HCT116 (cell line): ENCODE measurements at regions of chr11 and their contacts with region 1.

Region 1: DNA sequence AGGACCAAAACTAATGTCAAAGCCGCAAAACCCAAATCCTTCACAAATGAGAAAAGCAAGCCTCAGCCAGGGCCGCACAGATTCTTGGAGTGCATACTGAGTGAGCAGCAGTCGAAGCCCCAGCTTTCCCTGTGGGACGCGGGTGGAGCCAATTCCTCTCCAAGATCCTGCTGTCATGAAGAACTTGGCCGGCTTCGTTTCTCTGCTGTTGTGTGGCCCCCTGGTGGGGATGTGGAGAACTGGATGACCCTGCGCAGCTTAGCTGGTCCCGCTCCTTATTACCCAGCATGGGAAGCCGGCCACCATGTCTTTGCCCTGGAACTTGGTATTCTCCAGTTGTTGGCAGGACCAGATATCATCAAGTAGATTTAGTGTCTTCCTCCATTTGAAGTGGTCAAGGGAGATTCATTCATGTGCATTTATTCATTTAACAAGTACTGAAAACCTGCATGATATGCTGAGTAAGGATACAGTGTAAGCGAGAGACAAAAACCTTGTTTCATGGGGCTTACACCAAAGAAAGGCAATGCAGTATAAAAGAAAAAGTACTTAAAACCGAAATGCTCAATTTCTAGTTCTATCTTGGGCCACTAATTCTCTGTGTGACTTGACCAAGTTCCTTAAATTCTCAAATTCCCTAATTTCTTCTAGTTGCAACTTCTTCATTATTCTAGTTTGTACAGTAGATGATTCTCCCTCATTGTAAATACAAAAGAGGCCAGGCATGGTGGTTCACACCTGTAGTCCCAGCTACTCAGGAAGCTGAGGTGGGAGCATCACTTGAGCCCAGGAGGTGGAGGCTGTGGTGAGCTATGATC is 56.7 kb upstream of the CRTAM start:
- DNase-seq: peak; percentile 67
- ATAC-seq: peak; percentile 99
- H3K4me3 ChIP-seq: no peak overlapping the region
- H3K27ac ChIP-seq: no peak overlapping the region
- H3K4me1 ChIP-seq: peaks cover 0 to 6% of the 10 kb centered on the region in 2 experiments; a peak in 2 of 4 replicates
- H3K27me3 ChIP-seq: no peaks in the 10 kb centered on the region
- CTCF ChIP-seq: peak; percentile 88 to 94 (median 92)
- POLR2A ChIP-seq: no peak
- RAD21 ChIP-seq: peak; percentile 94

Region 2: DNA sequence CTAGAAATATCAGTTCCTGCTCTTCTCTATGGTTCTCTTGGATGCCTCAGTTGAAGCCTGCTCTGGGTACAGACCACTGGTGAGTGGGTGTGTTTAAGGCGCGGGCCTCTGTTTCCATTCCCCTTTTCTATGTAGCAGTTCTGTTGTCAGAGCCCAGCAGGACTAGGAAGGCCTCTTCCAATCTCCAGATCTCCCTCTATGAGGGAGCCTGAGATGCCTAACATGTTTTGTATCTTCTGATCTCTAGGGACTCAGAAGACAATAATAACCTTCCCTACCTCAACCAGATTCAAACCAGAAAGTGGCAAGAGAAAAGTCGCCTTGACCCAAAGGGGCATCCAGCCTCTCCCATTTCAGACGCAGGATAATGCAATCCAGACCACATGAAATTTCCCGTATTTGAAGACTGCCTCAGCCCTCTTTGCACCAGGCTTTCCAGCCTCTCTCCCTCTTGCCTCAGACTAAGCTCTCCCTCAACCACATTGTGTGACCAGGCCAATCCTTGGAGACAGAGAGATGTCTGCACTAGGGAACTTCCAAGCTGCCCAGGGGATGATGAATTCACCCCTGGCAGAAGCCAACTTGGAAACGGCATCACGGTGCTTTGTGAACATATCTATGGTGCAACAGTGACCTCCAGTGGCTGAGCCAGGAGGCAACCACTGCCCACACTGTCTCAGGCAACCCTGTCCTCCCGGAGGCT is 276.1 kb before region 1 on chr11:
- CTCF ChIA-PET with region 1: no interaction called
- POLR2A ChIA-PET with region 1: no interaction called
- RAD21 ChIA-PET with region 1: no interaction called
- intact Hi-C with region 1: no loop called
- DNase-seq: peak; percentile 58
- ATAC-seq: peak; percentile 99
- H3K4me3 ChIP-seq: no peak overlapping the region
- H3K27ac ChIP-seq: no peak overlapping the region
- H3K4me1 ChIP-seq: peaks cover 0 to 3% of the 10 kb centered on the region in 2 experiments; a peak in 3 of 4 replicates
- H3K27me3 ChIP-seq: no peaks in the 10 kb centered on the region
- CTCF ChIP-seq: peak; percentile 80 to 91 (median 91); a peak in 5 of 6 replicates
- POLR2A ChIP-seq: no peak
- RAD21 ChIP-seq: peak; percentile 98

Region 3: GRCh38 chr11:122578168-122578825 is 203.3 kb before region 1 on chr11:
- CTCF ChIA-PET with region 1: interaction called, 9 read pairs
- POLR2A ChIA-PET with region 1: no interaction called
- RAD21 ChIA-PET with region 1: interaction called in 1 of 2 experiments, 4 read pairs
- intact Hi-C with region 1: loop called (anchors 1 kb)
- DNase-seq: no peak
- ATAC-seq: no peak
- H3K4me3 ChIP-seq: no peak overlapping the region
- H3K27ac ChIP-seq: no peak overlapping the region
- H3K4me1 ChIP-seq: peaks cover 8 to 21% of the 10 kb centered on the region in 2 experiments
- H3K27me3 ChIP-seq: no peaks in the 10 kb centered on the region
- CTCF ChIP-seq: peak in 1 of 3 experiments; percentile 23; a peak in 1 of 6 replicates
- POLR2A ChIP-seq: no peak
- RAD21 ChIP-seq: peak; percentile 40

Region 4: DNA sequence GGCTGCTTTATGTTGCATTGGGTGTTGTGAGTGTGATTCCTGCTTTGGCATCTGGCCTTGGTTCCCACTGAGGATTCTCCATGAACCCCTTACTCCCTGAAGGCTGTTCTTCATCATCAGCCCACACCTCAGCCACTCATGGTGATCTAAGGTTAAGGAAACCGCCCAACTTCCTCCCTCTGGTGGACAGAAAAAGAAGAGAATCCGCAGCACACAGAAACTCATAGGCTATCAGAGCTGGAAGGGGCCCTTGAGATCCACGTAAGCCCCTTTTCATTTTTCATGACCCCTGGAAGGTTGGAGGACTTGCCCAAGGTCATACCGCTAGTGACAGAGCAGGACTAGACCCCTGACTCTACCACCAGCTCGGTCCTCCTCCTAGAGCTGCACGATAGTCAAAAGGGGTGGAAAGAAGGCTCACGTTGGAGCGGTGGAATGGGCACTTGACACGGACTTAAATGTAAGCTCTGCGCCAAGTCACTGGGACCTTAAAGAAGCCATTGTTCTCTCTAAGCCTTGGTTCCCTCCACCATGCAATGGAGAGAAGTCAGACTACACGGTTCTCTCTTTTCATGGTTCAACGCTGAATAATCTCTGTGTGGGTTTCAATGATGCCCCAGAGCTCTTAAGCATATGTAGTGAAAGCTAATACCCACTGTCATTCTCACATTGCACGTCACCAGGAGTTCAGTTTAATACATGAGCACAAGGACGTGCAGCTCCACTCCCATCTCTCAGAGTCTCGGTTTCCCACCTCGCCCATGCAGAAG is 26.8 kb before region 1 on chr11:
- CTCF ChIA-PET with region 1: interaction called, 14 read pairs
- POLR2A ChIA-PET with region 1: no interaction called
- RAD21 ChIA-PET with region 1: no interaction called
- intact Hi-C with region 1: no loop called
- DNase-seq: peak; percentile 10
- ATAC-seq: peak; percentile 89
- H3K4me3 ChIP-seq: no peak overlapping the region
- H3K27ac ChIP-seq: no peak overlapping the region
- H3K4me1 ChIP-seq: 0 out of 4 replicates have a peak, but pooled peaks cover 0 to 2% of the 10 kb centered on the region in 2 experiments
- H3K27me3 ChIP-seq: no peaks in the 10 kb centered on the region
- CTCF ChIP-seq: peak; percentile 37 to 67 (median 66); a peak in 5 of 6 replicates
- POLR2A ChIP-seq: no peak
- RAD21 ChIP-seq: peak; percentile 56